Activated CD8-positive, alpha-beta T cell treated with anti-CD3 and anti-CD28 coated beads for 36 hours (primary cell): ENCODE measurements at regions of chr21 and their contacts with region 1.

Region 1: GRCh38 chr21:32826329-32827167 is 55.0 kb upstream of the PAXBP1 start:
- DNase-seq: peak; percentile 61
- ATAC-seq: peak; percentile 90
- H3K4me3 Mint-ChIP-seq: no peak overlapping the region
- H3K27ac Mint-ChIP-seq: no peak overlapping the region
- H3K4me1 Mint-ChIP-seq: no peaks in the 10 kb centered on the region
- H3K27me3 Mint-ChIP-seq: peaks cover 3% of the 10 kb centered on the region
- CTCF ChIP-seq: peak; percentile 69

Region 2: GRCh38 chr21:32653311-32653901 is 173.1 kb before region 1 on chr21:
- CTCF ChIA-PET with region 1: interaction called, 20 read pairs
- POLR2A ChIA-PET with region 1: no interaction called
- intact Hi-C with region 1: loop called (anchors 2 kb)
- DNase-seq: peak; percentile 51
- ATAC-seq: peak; percentile 75
- H3K4me3 Mint-ChIP-seq: no peak overlapping the region
- H3K27ac Mint-ChIP-seq: no peak overlapping the region
- H3K4me1 Mint-ChIP-seq: peaks cover 11% of the 10 kb centered on the region
- H3K27me3 Mint-ChIP-seq: no peaks in the 10 kb centered on the region
- CTCF ChIP-seq: peak; percentile 69

Region 3: GRCh38 chr21:32658524-32658923 is 168.0 kb before region 1 on chr21:
- CTCF ChIA-PET with region 1: interaction called, 20 read pairs
- POLR2A ChIA-PET with region 1: no interaction called
- intact Hi-C with region 1: loop called (anchors 2 kb)
- DNase-seq: no peak
- ATAC-seq: no peak
- H3K4me3 Mint-ChIP-seq: no peak overlapping the region
- H3K27ac Mint-ChIP-seq: no peak overlapping the region
- H3K4me1 Mint-ChIP-seq: no peaks in the 10 kb centered on the region
- H3K27me3 Mint-ChIP-seq: no peaks in the 10 kb centered on the region
- CTCF ChIP-seq: no peak

Region 4: DNA sequence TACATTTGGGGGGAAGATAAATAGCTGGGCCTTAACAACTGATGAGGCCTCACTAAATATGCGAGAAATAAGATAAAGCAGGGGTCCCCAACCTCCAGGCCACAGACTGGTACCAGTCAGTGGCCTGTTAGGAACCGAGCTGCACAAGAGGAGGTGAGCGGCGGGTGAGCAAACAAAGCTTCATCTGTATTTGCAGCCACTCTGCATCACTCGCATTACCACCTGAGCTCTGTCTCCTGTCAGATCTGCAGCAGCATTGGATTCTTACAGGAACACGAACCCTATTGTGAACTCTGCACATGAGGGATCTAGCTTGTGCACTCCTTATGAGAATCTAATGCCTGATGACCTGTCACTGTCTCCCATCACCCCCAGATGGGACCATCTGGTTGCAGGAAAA is 49.8 kb before region 1 on chr21:
- CTCF ChIA-PET with region 1: interaction called, 14 read pairs
- POLR2A ChIA-PET with region 1: no interaction called
- intact Hi-C with region 1: no loop called
- DNase-seq: no peak
- ATAC-seq: no peak
- H3K4me3 Mint-ChIP-seq: no peak overlapping the region
- H3K27ac Mint-ChIP-seq: no peak overlapping the region
- H3K4me1 Mint-ChIP-seq: peaks cover 17% of the 10 kb centered on the region
- H3K27me3 Mint-ChIP-seq: no peaks in the 10 kb centered on the region
- CTCF ChIP-seq: no peak

Region 5: GRCh38 chr21:32782698-32783097 is 43.9 kb before region 1 on chr21:
- CTCF ChIA-PET with region 1: interaction called, 12 read pairs
- POLR2A ChIA-PET with region 1: no interaction called
- intact Hi-C with region 1: no loop called
- DNase-seq: no peak
- ATAC-seq: no peak
- H3K4me3 Mint-ChIP-seq: no peak overlapping the region
- H3K27ac Mint-ChIP-seq: no peak overlapping the region
- H3K4me1 Mint-ChIP-seq: peaks cover 10% of the 10 kb centered on the region
- H3K27me3 Mint-ChIP-seq: no peaks in the 10 kb centered on the region
- CTCF ChIP-seq: no peak

Region 6: DNA sequence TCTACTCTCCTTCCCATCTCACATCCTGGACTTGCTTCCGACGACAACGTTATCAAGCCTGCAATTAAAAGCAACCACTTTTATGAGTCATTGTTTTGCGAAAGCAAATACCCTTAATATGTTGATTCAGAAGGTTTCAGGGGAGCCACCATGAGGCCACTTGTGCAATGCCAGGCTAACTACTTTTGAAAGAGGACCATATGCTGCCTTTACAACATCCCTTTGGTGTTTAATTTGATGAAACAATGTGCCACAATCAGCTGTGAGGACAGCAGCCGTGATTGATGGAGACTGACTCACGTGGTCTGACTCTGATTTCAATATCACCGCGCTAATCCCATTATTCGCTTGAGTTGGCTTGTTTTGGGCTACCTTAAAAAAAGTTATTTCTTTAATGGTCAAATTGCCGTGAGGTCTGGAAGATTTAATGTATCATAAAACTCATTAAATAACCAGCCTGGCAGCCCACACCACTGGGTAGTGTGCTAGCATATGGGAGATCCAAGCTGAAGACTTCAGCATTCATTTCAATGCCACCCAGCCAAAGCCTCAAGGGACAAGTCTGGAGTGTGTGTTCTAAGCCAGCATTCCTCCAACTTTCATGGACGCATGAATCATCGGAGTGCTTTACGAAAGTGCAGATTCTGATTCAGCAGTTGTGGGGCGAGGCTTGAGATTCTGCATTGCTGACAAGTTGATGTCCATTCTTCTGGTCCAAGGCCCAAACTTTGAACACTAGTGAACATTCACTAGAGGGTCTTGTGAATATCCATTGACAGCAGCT is 18.3 kb after region 1 on chr21:
- CTCF ChIA-PET with region 1: no interaction called
- POLR2A ChIA-PET with region 1: no interaction called
- intact Hi-C with region 1: no loop called
- DNase-seq: no peak
- ATAC-seq: no peak
- H3K4me3 Mint-ChIP-seq: no peak overlapping the region
- H3K27ac Mint-ChIP-seq: no peak overlapping the region
- H3K4me1 Mint-ChIP-seq: no peaks in the 10 kb centered on the region
- H3K27me3 Mint-ChIP-seq: peaks cover 1% of the 10 kb centered on the region
- CTCF ChIP-seq: no peak

Region 7: GRCh38 chr21:32861866-32862265 is 35.3 kb after region 1 on chr21:
- CTCF ChIA-PET with region 1: no interaction called
- POLR2A ChIA-PET with region 1: no interaction called
- intact Hi-C with region 1: no loop called
- DNase-seq: no peak
- ATAC-seq: no peak
- H3K4me3 Mint-ChIP-seq: no peak overlapping the region
- H3K27ac Mint-ChIP-seq: no peak overlapping the region
- H3K4me1 Mint-ChIP-seq: no peaks in the 10 kb centered on the region
- H3K27me3 Mint-ChIP-seq: peaks cover 3% of the 10 kb centered on the region
- CTCF ChIP-seq: no peak

Region 8: GRCh38 chr21:33751120-33751519 is 924.6 kb after region 1 on chr21:
- CTCF ChIA-PET with region 1: no interaction called
- POLR2A ChIA-PET with region 1: no interaction called
- intact Hi-C with region 1: no loop called
- DNase-seq: no peak
- ATAC-seq: no peak
- H3K4me3 Mint-ChIP-seq: no peak overlapping the region
- H3K27ac Mint-ChIP-seq: no peak overlapping the region
- H3K4me1 Mint-ChIP-seq: no peaks in the 10 kb centered on the region
- H3K27me3 Mint-ChIP-seq: no peaks in the 10 kb centered on the region
- CTCF ChIP-seq: no peak